ENCODE measurements at regions of chr11 and their contacts with region 1.

Region 1: GRCh38 chr11:20127671-20128527 is 32.4 kb downstream of the DBX1 start:
- DNase-seq: peak; percentile 86 to 92
- ATAC-seq: peak; percentile 81
- H3K4me3 ChIP-seq: no peak overlapping the region
- H3K27ac ChIP-seq: peak overlapping the region in 1 of 2 donors; percentile 13
- H3K4me1 ChIP-seq: no peaks in the 10 kb centered on the region
- H3K27me3 ChIP-seq: no peaks in the 10 kb centered on the region

Region 2: GRCh38 chr11:19561011-19561410 is 566.9 kb before region 1 on chr11:
- intact Hi-C with region 1: loop called (anchors 2 to 5 kb)
- DNase-seq: no peak
- ATAC-seq: no peak
- H3K4me3 ChIP-seq: no peak overlapping the region
- H3K27ac ChIP-seq: no peak overlapping the region
- H3K4me1 ChIP-seq: no peaks in the 10 kb centered on the region
- H3K27me3 ChIP-seq: no peaks in the 10 kb centered on the region

Region 3: DNA sequence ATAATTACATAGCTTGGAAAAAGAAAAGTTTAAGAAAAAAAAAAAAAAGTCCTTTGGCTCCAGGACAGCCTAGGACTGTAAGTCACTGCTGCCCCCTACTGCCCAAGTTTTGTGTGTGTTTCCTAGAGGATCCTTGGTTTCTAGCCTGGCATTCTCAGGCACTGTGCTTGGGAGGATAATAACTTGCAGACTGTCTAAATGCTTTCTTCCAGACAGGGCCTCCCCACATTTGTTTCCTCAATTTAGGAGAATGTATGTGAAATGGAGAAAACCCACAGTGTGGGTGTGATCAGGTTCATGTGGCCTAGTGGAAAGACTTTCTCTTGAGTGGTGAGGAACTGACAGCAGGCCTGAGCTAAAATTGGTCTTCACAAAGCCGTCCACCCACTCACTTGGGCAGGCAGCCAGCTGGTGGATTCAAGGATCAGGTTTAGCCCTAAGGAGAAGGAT is 224.3 kb before region 1 on chr11:
- intact Hi-C with region 1: loop called in 1 of 2 experiments (anchors 5 kb)
- DNase-seq: peak; percentile 82 to 85
- ATAC-seq: peak; percentile 85
- H3K4me3 ChIP-seq: no peak overlapping the region
- H3K27ac ChIP-seq: peak overlapping the region in 1 of 2 donors; percentile 74
- H3K4me1 ChIP-seq: peaks cover 0 to 7% of the 10 kb centered on the region in 2 donors
- H3K27me3 ChIP-seq: no peaks in the 10 kb centered on the region

Region 4: DNA sequence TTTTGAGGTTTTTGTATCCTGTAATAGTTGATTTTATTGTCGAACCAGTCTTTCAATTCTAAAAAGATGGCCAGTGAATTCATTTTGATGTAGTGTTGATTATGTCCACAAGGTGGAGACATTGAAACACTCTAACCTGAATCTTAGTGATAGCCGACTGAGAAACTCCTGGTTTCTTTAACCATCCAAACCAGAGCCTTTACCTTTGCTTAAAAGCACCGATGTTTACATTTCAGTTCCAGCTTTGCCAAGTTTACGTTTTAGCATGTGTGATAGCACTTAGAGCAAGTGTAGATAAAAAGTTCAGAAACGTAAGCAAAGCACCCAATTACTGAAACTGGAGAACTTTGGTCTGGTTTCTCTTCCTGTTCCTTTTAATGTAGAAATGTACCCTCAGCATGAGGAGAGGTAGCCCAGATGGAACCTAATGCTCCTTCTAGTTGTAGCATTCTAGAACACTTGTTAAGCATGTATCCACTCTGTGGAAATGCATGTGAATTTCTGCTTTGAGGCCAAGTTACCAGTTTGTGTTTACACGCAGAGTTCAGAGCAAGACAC is 176.3 kb before region 1 on chr11:
- intact Hi-C with region 1: loop called (anchors 1 to 5 kb)
- DNase-seq: no peak
- ATAC-seq: no peak
- H3K4me3 ChIP-seq: no peak overlapping the region
- H3K27ac ChIP-seq: no peak overlapping the region
- H3K4me1 ChIP-seq: peaks cover 6 to 11% of the 10 kb centered on the region in 2 donors
- H3K27me3 ChIP-seq: no peaks in the 10 kb centered on the region

Region 5: DNA sequence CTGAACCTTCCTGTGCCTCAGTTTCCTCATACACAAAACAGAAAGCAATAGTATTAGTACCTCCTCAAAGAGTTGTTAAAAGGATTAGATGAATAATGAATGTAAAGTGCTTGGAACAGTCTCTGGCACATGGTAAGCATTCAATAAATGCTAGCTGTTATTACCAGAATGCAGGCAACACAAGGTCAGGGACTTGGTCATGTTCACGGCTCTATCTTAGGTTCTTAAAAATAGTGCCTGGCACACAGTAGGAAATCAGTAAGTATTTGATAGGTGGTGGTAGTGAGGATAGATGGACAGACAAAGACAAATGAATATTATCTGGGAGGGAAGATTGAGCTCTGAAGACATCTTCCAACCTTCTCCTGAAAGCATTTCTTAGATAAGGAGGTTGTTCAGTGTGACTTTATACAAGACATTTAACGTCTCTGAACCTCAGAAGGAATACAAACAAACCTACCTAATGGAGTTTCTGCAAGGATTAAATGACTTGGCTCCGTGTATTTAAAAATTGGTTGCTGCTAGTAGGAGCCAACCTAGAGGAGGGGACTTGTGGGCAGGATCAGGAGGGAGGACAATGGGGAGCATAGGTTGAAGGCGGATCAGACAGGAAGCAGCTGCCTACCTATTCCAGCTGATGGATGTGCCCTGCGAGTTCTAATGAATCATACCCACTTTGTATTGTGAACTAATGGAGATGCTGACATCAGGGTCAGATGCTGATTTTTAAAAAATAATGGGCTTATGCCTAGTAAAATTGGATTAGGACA is 61.7 kb before region 1 on chr11:
- intact Hi-C with region 1: no loop called
- DNase-seq: no peak
- ATAC-seq: no peak
- H3K4me3 ChIP-seq: no peak overlapping the region
- H3K27ac ChIP-seq: no peak overlapping the region
- H3K4me1 ChIP-seq: peaks cover 1 to 4% of the 10 kb centered on the region in 2 donors
- H3K27me3 ChIP-seq: no peaks in the 10 kb centered on the region

Region 6: GRCh38 chr11:20355221-20356219 is 227.6 kb after region 1 on chr11:
- intact Hi-C with region 1: loop called (anchors 5 kb)
- DNase-seq: no peak
- ATAC-seq: no peak
- H3K4me3 ChIP-seq: no peak overlapping the region
- H3K27ac ChIP-seq: no peak overlapping the region
- H3K4me1 ChIP-seq: peaks cover 0 to 1% of the 10 kb centered on the region in 2 donors
- H3K27me3 ChIP-seq: no peaks in the 10 kb centered on the region

Region 7: GRCh38 chr11:20368441-20368840 is 240.5 kb after region 1 on chr11:
- intact Hi-C with region 1: no loop called
- DNase-seq: no peak
- ATAC-seq: no peak
- H3K4me3 ChIP-seq: no peak overlapping the region
- H3K27ac ChIP-seq: no peak overlapping the region
- H3K4me1 ChIP-seq: peaks cover 1 to 5% of the 10 kb centered on the region in 2 donors
- H3K27me3 ChIP-seq: no peaks in the 10 kb centered on the region

Measured in aorta (tissue), 5 donors.